GM13977 (cell line): ENCODE measurements at regions of chr6 and their contacts with region 1.

Region 1: GRCh38 chr6:26054857-26055669 is 32.2 kb upstream of the HFE start:
- DNase-seq: peak; percentile 71
- CTCF ChIP-seq: no peak

Region 2: DNA sequence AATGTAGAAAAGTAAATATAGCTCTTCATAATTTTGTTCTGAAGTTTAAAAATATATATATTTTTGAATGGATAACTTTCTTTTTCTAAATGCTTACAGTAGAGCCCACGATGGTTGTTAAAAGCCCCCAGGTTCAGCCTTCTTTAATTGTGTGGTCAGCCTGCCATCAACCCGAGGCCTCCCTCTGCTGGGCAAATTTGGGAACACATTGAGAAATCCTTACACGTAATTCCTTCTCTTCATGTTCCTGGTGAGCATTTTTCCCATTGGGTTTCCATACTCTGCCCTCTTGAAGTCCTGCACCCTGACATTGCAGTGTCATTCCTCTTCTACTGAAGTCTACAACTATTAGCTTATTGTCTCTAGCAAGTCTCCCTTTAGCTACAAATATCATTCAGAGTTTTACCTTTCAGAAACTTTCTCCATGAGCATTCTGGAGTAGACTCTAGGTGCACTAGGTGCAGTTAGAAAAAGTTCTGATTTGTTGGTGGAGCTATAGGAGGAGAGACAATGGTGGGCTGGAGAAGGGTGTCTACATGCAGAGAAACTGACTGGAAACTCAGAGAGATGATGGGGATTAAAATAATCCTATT is 51.9 kb before region 1 on chr6:
- in situ Hi-C with region 1: no loop called
- DNase-seq: peak; percentile 42
- CTCF ChIP-seq: peak; percentile 75

Region 3: DNA sequence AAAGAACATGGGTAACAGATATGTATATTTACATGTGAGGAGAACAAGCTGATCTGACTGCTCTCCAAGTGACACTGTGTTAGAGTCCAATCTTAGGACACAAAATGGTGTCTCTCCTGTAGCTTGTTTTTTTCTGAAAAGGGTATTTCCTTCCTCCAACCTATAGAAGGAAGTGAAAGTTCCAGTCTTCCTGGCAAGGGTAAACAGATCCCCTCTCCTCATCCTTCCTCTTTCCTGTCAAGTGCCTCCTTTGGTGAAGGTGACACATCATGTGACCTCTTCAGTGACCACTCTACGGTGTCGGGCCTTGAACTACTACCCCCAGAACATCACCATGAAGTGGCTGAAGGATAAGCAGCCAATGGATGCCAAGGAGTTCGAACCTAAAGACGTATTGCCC is 37.4 kb after region 1 on chr6:
- in situ Hi-C with region 1: loop called (anchors 5 kb)
- DNase-seq: no peak
- CTCF ChIP-seq: no peak